ENCODE measurements at regions of chr1 and their contacts with region 1.

Region 1: DNA sequence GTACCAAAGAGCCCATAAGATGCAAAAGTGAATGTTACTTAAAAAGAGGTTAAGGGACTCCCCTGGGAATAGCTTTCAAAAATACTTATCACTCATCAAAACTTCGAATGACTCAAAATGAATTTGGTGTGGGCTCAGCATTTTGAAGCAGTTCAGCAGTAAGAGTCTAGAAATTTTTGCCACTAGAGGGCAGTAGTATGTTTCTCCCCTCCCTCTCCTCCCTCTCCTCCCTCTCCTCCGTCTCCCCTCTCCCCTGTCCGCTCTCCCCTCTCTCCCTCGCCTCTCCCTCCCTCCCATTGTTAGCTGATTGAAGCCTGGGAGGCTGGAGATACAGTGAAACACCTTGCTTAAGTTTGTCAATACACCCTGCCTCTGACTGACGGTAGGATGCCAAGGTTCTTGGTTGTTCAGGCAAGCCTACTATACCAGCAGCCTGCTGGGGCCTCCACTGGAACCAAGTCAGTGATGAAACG is 70.8 kb upstream of the TENT5C start:
- DNase-seq: peak; percentile 28
- ATAC-seq: peak; percentile 96
- H3K4me3 ChIP-seq: no peak overlapping the region
- H3K27ac ChIP-seq: no peak overlapping the region
- H3K4me1 ChIP-seq: no peaks in the 10 kb centered on the region
- H3K27me3 ChIP-seq: no peaks in the 10 kb centered on the region
- CTCF ChIP-seq: peak; percentile 60 to 76 (median 62)
- EP300 ChIP-seq: 0 out of 4 replicates have a peak, but pooled peaks of 1 of the 2 experiments have one; percentile 35
- POLR2A ChIP-seq: no peak
- RAD21 ChIP-seq: peak; percentile 49

Region 2: DNA sequence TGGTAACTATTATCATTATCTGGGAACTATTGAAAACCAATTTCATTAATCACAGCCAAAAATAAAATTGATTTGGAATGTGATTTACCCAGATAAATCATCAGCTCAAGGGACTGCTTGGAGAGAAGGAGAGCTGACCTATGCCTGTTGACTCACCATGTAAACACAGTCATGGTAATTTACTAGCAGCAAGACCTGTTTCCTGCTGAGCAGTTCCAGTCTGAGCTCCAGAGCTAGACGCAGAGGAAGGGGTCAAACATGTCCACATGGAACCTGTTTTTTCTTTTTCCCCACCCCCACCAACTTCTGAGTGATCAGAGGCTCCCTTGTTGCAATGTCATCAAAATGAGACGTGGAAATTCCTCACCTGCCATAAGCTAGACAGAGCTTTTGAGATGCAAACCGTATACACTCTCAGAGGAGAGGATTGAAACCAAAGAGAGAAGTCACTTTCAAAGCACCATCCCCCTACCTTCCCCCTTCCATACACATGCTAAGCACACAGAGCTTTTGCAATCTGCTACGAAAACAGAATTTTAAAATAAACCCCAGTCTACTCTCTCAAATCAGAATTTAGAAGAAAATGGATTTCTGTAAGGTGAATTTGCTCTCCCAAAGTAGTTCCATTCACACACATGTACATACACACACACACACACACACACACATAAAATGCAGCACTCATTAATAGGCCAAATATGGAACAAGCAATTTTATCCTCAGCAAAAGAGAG is 681.2 kb before region 1 on chr1:
- CTCF ChIA-PET with region 1: no interaction called
- POLR2A ChIA-PET with region 1: no interaction called
- RAD21 ChIA-PET with region 1: no interaction called
- SMC1A ChIA-PET with region 1: no interaction called
- in situ Hi-C with region 1: no loop called
- intact Hi-C with region 1: no loop called
- DNase-seq: no peak
- ATAC-seq: peak; percentile 81
- H3K4me3 ChIP-seq: no peak overlapping the region
- H3K27ac ChIP-seq: no peak overlapping the region
- H3K4me1 ChIP-seq: 0 out of 2 replicates have a peak, but pooled peaks cover 3% of the 10 kb centered on the region
- H3K27me3 ChIP-seq: no peaks in the 10 kb centered on the region
- CTCF ChIP-seq: no peak
- EP300 ChIP-seq: no peak
- POLR2A ChIP-seq: no peak
- RAD21 ChIP-seq: no peak

Region 3: DNA sequence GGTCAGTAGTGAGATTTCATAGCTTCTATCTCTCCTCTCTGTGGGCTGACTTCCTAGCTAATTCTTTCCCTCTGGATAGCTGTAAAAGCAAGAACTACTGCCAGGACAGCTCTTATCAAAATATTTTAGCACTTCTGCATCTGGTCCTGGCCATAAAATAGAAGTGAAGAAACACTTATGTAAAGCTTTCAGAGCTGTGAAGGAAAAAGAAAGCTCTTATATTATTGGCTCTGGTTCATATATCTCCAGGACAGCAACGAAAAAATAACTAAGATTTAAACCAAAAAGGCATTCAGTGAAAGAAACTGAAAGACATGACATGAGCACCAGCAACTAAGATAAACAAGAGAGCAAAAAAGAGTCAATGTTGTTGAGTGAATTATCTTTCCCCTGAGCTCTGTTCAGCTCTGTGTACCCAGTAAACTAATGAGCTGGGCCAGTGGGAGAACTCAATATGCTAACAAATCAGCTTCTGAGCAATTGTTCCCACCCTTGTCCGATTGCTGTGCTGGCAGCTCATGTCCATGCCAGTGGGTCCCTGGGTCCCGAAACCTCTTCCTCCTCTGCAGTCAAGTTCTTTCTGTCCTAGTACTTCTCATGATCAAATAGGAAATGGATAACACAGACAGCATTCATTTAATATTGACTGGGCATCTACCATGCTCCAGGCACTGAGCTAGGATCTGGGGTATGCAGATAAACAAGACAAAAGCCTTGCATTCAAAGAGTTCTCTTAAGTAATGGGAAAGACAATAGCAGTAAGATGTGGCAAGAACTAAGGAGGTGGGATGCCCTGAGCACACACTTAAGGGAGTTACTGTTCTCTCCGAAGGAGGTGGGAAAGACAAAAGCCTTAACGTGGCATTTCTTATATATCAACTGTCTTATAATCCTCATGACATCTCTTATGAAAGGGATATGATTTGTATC is 213.1 kb before region 1 on chr1:
- CTCF ChIA-PET with region 1: no interaction called
- POLR2A ChIA-PET with region 1: no interaction called
- RAD21 ChIA-PET with region 1: no interaction called
- SMC1A ChIA-PET with region 1: no interaction called
- in situ Hi-C with region 1: no loop called
- intact Hi-C with region 1: no loop called
- DNase-seq: no peak
- ATAC-seq: no peak
- H3K4me3 ChIP-seq: no peak overlapping the region
- H3K27ac ChIP-seq: no peak overlapping the region
- H3K4me1 ChIP-seq: no peaks in the 10 kb centered on the region
- H3K27me3 ChIP-seq: no peaks in the 10 kb centered on the region; a peak in 1 of 4 replicates
- CTCF ChIP-seq: no peak
- EP300 ChIP-seq: no peak
- POLR2A ChIP-seq: no peak
- RAD21 ChIP-seq: no peak

Region 4: DNA sequence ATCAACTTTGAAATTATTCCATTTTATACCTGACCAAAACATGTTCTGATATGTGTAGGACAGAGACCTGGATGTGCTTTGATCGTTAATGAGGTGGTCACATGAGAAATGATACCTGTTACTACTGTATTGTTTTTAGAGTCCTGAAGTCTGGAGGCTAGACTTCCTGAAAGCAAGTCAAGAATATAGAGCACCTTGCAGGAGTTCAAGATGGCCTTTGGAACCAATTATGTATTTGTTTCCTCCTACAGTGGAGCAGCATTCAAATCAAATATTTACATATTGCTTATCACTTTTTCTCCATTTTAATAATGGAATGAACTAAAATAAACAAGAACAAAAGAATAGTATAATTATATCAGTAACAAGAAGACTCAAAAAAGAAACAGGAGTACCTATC is 11.9 kb before region 1 on chr1:
- CTCF ChIA-PET with region 1: interaction called, 20 read pairs
- POLR2A ChIA-PET with region 1: no interaction called
- RAD21 ChIA-PET with region 1: no interaction called
- SMC1A ChIA-PET with region 1: interaction called, 8 read pairs
- in situ Hi-C with region 1: no loop called
- intact Hi-C with region 1: no loop called
- DNase-seq: no peak
- ATAC-seq: no peak
- H3K4me3 ChIP-seq: no peak overlapping the region
- H3K27ac ChIP-seq: no peak overlapping the region
- H3K4me1 ChIP-seq: no peaks in the 10 kb centered on the region
- H3K27me3 ChIP-seq: no peaks in the 10 kb centered on the region
- CTCF ChIP-seq: no peak
- EP300 ChIP-seq: no peak
- POLR2A ChIP-seq: no peak
- RAD21 ChIP-seq: no peak

Region 5: GRCh38 chr1:117674521-117675397 is 139.7 kb after region 1 on chr1:
- CTCF ChIA-PET with region 1: interaction called, 151 read pairs
- POLR2A ChIA-PET with region 1: no interaction called
- RAD21 ChIA-PET with region 1: interaction called, 18 read pairs
- SMC1A ChIA-PET with region 1: interaction called, 40 read pairs
- in situ Hi-C with region 1: loop called (anchors 5 kb)
- intact Hi-C with region 1: loop called (anchors 2 kb)
- DNase-seq: no peak
- ATAC-seq: peak; percentile 80
- H3K4me3 ChIP-seq: no peak overlapping the region
- H3K27ac ChIP-seq: no peak overlapping the region
- H3K4me1 ChIP-seq: peaks cover 12% of the 10 kb centered on the region
- H3K27me3 ChIP-seq: peaks cover 8 to 10% of the 10 kb centered on the region in 2 experiments
- CTCF ChIP-seq: peak; percentile 70 to 74 (median 74); a peak in 5 of 6 replicates
- EP300 ChIP-seq: no peak
- POLR2A ChIP-seq: no peak
- RAD21 ChIP-seq: peak; percentile 86

Region 6: GRCh38 chr1:117747605-117748004 is 212.6 kb after region 1 on chr1:
- CTCF ChIA-PET with region 1: interaction called, 269 read pairs
- POLR2A ChIA-PET with region 1: no interaction called
- RAD21 ChIA-PET with region 1: interaction called, 26 read pairs
- SMC1A ChIA-PET with region 1: interaction called, 84 read pairs
- in situ Hi-C with region 1: loop called (anchors 5 kb)
- intact Hi-C with region 1: loop called (anchors 5 kb)
- DNase-seq: no peak
- ATAC-seq: no peak
- H3K4me3 ChIP-seq: no peak overlapping the region
- H3K27ac ChIP-seq: no peak overlapping the region
- H3K4me1 ChIP-seq: no peaks in the 10 kb centered on the region
- H3K27me3 ChIP-seq: no peaks in the 10 kb centered on the region; a peak in 2 of 4 replicates
- CTCF ChIP-seq: no peak
- EP300 ChIP-seq: no peak
- POLR2A ChIP-seq: no peak
- RAD21 ChIP-seq: no peak

Region 7: GRCh38 chr1:118169016-118169415 is 634.0 kb after region 1 on chr1:
- CTCF ChIA-PET with region 1: no interaction called
- POLR2A ChIA-PET with region 1: no interaction called
- RAD21 ChIA-PET with region 1: no interaction called
- SMC1A ChIA-PET with region 1: no interaction called
- in situ Hi-C with region 1: no loop called
- intact Hi-C with region 1: no loop called
- DNase-seq: no peak
- ATAC-seq: no peak
- H3K4me3 ChIP-seq: no peak overlapping the region
- H3K27ac ChIP-seq: no peak overlapping the region
- H3K4me1 ChIP-seq: no peaks in the 10 kb centered on the region
- H3K27me3 ChIP-seq: no peaks in the 10 kb centered on the region
- CTCF ChIP-seq: no peak
- EP300 ChIP-seq: no peak
- POLR2A ChIP-seq: no peak
- RAD21 ChIP-seq: no peak

Measured in GM12878 (cell line).